ENCODE measurements at regions of chr17 and their contacts with region 1.

Region 1: GRCh38 chr17:7252176-7253043 is at the start of gene ELP5:
- H3K4me3 Mint-ChIP-seq: peak within 1 kb of the TSS; percentile 96
- H3K27ac Mint-ChIP-seq: peak within 1 kb of the TSS; percentile 100
- H3K4me1 Mint-ChIP-seq: peaks cover 46% of the 10 kb centered on the region
- H3K27me3 Mint-ChIP-seq: no peaks in the 10 kb centered on the region

Region 2: GRCh38 chr17:7204828-7205461 is 47.5 kb before region 1 on chr17:
- intact Hi-C with region 1: loop called (anchors 1 kb)
- H3K4me3 Mint-ChIP-seq: peak overlapping the region; percentile 72
- H3K27ac Mint-ChIP-seq: peak overlapping the region; percentile 75
- H3K4me1 Mint-ChIP-seq: peaks cover 41% of the 10 kb centered on the region
- H3K27me3 Mint-ChIP-seq: no peaks in the 10 kb centered on the region

Region 3: GRCh38 chr17:7214300-7215135 is 37.9 kb before region 1 on chr17:
- intact Hi-C with region 1: loop called (anchors 5 kb)
- H3K4me3 Mint-ChIP-seq: peak overlapping the region; percentile 94
- H3K27ac Mint-ChIP-seq: peak overlapping the region; percentile 87
- H3K4me1 Mint-ChIP-seq: peaks cover 71% of the 10 kb centered on the region
- H3K27me3 Mint-ChIP-seq: no peaks in the 10 kb centered on the region

Region 4: GRCh38 chr17:7239091-7240027 is 13.1 kb before region 1 on chr17 and contains the start of gene PHF23:
- intact Hi-C with region 1: loop called (anchors 1 kb)
- H3K4me3 Mint-ChIP-seq: peak within 1 kb of the TSS; percentile 98
- H3K27ac Mint-ChIP-seq: peak within 1 kb of the TSS; percentile 98
- H3K4me1 Mint-ChIP-seq: peaks cover 63% of the 10 kb centered on the region
- H3K27me3 Mint-ChIP-seq: no peaks in the 10 kb centered on the region

Region 5: GRCh38 chr17:7263083-7264078 is 11.0 kb after region 1 on chr17:
- intact Hi-C with region 1: no loop called
- H3K4me3 Mint-ChIP-seq: peak overlapping the region; percentile 67
- H3K27ac Mint-ChIP-seq: peak overlapping the region; percentile 66
- H3K4me1 Mint-ChIP-seq: peaks cover 49% of the 10 kb centered on the region
- H3K27me3 Mint-ChIP-seq: peaks cover 48% of the 10 kb centered on the region

Region 6: DNA sequence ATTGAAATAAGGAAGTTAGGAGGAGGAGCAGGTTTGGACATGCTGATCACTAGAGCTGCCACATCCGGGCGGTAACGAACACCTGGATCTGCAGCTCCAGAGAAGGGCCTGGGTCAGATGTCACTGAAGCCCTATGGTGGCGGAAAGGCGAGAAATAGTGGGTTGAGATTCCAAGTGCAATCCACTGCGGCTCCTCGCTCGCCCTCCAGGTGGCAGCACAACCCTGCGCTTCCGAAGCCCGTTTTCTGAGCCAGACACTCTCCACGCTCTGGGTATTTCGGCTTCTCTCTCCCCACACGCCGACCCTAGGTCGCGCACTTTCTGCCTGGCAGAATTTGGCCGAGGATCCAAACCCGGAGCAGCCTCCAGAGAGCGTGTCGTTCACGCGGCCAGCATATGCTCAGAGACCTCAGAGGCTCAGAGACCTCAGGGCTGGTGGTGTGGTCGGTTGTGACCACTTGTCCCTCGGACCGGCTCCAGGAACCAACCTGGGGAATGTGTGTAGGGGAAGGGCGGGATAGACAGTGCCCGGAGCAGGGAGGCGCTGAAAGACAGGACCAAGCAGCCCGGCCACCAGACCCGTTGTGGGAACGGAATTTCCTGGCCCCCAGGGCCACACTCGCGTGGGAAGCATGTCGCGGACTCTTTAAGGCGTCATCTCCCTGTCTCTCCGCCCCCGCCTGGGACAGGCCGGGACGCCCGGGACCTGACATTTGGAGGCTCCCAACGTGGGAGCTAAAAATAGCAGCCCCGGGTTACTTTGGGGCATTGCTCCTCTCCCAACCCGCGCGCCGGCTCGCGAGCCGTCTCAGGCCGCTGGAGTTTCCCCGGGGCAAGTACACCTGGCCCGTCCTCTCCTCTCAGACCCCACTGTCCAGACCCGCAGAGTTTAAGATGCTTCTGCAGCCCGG is 28.4 kb after region 1 on chr17:
- intact Hi-C with region 1: loop called (anchors 1 kb)
- H3K4me3 Mint-ChIP-seq: peak overlapping the region; percentile 73
- H3K27ac Mint-ChIP-seq: peak overlapping the region; percentile 46
- H3K4me1 Mint-ChIP-seq: peaks cover 47% of the 10 kb centered on the region
- H3K27me3 Mint-ChIP-seq: peaks cover 76% of the 10 kb centered on the region

Region 7: GRCh38 chr17:7306911-7307686 is 54.7 kb after region 1 on chr17 and contains the start of gene EIF5A:
- intact Hi-C with region 1: loop called (anchors 5 kb)
- H3K4me3 Mint-ChIP-seq: peak within 1 kb of the TSS; percentile 94
- H3K27ac Mint-ChIP-seq: peak within 1 kb of the TSS; percentile 95
- H3K4me1 Mint-ChIP-seq: peaks cover 35% of the 10 kb centered on the region
- H3K27me3 Mint-ChIP-seq: no peaks in the 10 kb centered on the region

Region 8: GRCh38 chr17:7496470-7497183 is 244.2 kb after region 1 on chr17:
- intact Hi-C with region 1: no loop called
- H3K4me3 Mint-ChIP-seq: no peak overlapping the region
- H3K27ac Mint-ChIP-seq: no peak overlapping the region
- H3K4me1 Mint-ChIP-seq: peaks cover 18% of the 10 kb centered on the region
- H3K27me3 Mint-ChIP-seq: no peaks in the 10 kb centered on the region

Measured in dendritic cell treated with granulocyte-macrophage colony-stimulating factor and Interleukin-4, amounts not matched to agents 40 ng/mL and 50 ng/mL, for 4 days (primary cell).